Adrenal gland (tissue), 19 donors: ENCODE measurements at regions of chr17 and their contacts with region 1.

Region 1: GRCh38 chr17:66944351-66945139 is 20.0 kb upstream of the CACNG4 start:
- DNase-seq: peak in 4 of 7 donors; percentile 32 to 59 (median 56)
- H3K4me3 ChIP-seq: no peak overlapping the region
- H3K27ac ChIP-seq: no peak overlapping the region
- H3K4me1 ChIP-seq: peaks cover 0 to 9% of the 10 kb centered on the region in 2 donors
- H3K27me3 ChIP-seq: peaks cover 14% of the 10 kb centered on the region
- CTCF ChIP-seq: no peak
- POLR2A ChIP-seq: no peak

Region 2: DNA sequence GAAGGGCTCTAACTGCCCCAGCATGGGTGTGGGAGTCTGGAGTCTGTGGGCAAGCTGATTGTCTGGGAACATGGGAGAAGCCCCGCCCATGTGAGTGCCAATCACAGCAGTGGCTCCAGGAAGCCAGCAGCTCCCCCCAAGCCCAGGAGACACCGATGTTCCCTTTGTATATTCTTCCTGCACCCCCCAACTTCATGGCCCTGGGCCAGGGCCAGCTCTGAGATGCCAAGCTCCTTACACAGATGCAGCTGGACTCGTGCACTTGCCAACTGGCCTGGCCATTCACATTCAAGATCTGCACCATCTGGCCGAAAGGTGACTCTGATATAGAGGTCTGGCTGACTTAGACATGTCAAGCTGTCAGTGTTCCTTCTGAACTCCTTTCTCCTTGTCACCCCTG is 59.1 kb before region 1 on chr17:
- intact Hi-C with region 1: loop called in 1 of 2 experiments (anchors 10 kb)
- DNase-seq: no peak
- H3K4me3 ChIP-seq: no peak overlapping the region
- H3K27ac ChIP-seq: no peak overlapping the region
- H3K4me1 ChIP-seq: no peaks in the 10 kb centered on the region
- H3K27me3 ChIP-seq: no peaks in the 10 kb centered on the region
- CTCF ChIP-seq: no peak
- POLR2A ChIP-seq: no peak

Region 3: GRCh38 chr17:66992911-66993442 is 48.4 kb after region 1 on chr17:
- intact Hi-C with region 1: no loop called
- DNase-seq: no peak
- H3K4me3 ChIP-seq: no peak overlapping the region
- H3K27ac ChIP-seq: no peak overlapping the region
- H3K4me1 ChIP-seq: no peaks in the 10 kb centered on the region
- H3K27me3 ChIP-seq: no peaks in the 10 kb centered on the region
- CTCF ChIP-seq: no peak
- POLR2A ChIP-seq: no peak

Region 4: DNA sequence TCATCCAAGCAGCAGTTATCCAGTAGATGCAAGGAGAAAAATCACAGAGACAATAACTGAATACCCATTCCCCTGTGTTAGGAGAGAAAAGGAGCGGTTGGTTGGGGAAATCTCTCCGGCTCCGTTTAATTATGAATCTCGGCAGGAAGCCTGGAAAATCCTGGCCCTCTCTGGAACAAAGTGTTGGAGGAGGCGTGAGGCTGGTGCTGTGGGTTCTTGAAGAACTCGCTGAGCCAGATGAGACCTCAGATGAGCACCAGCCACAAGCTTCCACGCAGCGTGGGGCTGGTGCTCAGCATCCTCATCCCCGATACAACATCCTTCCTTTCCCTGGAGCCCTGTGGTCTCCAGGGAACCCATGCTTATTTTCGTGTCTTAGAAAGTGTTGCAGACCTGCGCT is 59.6 kb after region 1 on chr17:
- intact Hi-C with region 1: loop called in 1 of 2 experiments (anchors 10 kb)
- DNase-seq: no peak
- H3K4me3 ChIP-seq: no peak overlapping the region
- H3K27ac ChIP-seq: no peak overlapping the region
- H3K4me1 ChIP-seq: no peaks in the 10 kb centered on the region
- H3K27me3 ChIP-seq: no peaks in the 10 kb centered on the region
- CTCF ChIP-seq: no peak
- POLR2A ChIP-seq: no peak